Heart right ventricle (tissue), 16 donors: ENCODE measurements at regions of chr17 and their contacts with region 1.

Region 1: DNA sequence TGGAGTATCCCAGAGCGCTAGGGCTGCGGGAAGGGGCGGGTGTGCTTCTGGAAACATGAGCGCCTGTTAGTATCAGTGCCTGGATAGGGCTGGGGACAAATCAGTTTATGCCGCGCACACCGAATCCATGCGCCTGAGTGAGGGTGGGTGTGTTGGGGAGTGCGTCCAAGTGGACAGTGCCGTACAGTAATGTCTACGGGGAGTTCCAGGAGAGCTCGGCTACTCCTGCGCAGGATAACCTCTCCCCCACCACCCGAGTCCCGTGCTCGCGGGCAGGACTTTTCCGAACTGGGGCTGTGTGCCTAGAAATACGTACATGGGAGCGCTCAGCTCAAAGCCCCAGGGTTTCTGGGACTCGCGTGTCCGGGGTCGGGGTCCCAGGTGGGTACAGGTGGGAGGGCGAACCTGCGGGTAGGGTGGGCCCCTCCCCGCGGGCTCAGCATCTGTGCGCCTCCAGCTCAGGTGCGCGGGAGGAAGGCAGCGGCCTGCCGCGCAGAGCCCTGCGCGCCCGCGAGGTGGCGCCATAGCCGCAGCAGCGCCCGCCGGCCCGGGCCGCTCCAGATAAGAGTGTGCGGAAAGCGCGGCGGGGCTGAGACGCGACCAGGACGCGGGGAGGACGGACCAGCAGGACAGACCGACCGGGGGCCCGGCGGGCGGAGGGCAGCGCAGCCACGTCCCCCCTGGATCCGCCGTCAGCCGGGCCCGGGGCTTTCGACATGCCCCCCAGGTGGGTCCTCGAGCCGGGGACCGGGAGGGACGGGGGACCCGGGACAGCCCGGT is at the start of gene HIC1:
- DNase-seq: peak; percentile 79 to 85
- ATAC-seq: peak; percentile 57 to 71 (median 60)
- H3K4me3 ChIP-seq: peak within 1 kb of the TSS; percentile 50 to 83 (median 72)
- H3K27ac ChIP-seq: peak within 1 kb of the TSS; percentile 78 to 97 (median 93)
- H3K4me1 ChIP-seq: peaks cover 22 to 69% (median 53%) of the 10 kb centered on the region in 9 donors
- H3K27me3 ChIP-seq: peaks cover 0 to 80% (median 17%) of the 10 kb centered on the region in 7 donors
- CTCF ChIP-seq: peak; percentile 93 to 99 (median 98)
- total RNA-seq, gene HIC1: 3.5 to 37.5 (median 12.1) TPM

Region 2: DNA sequence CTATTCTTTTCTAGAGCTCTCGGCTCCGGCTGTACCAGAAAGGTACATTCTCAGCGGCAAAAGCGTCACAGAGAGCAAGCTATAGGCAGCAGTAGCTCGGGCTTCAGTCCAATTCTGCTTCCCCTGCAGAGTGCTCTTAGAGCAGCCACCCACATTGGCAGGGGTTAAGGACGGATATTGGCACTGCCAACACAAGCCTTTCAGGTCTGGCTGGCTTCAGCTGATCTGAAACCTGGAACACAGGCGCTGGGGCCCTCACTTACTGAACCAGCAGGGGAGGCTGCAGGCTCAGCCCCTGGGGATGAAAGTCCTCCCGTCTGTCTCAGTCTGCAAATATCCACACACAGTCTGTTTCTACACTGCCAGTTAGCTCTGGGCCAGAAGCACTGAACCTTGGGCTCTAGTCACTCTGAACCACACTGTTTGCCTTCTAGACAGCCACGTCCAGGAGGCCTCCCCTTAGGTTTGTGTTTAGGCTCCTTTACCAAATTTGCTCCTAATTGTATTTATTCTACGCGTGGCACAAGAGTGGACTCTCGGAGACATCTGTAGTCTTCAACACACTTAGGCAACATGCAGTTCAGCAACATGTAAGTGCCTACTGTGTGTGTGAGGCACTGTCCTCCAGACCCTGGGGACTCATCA is 40.3 kb after region 1 on chr17:
- intact Hi-C with region 1: loop called in 1 of 10 experiments (anchors 5 kb)
- DNase-seq: peak; percentile 70 to 73
- ATAC-seq: peak; percentile 80 to 93 (median 88)
- H3K4me3 ChIP-seq: no peak overlapping the region
- H3K27ac ChIP-seq: peak overlapping the region in 9 of 10 donors; percentile 17 to 65 (median 37)
- H3K4me1 ChIP-seq: peaks cover 5 to 51% (median 26%) of the 10 kb centered on the region in 9 donors
- H3K27me3 ChIP-seq: no peaks in the 10 kb centered on the region
- CTCF ChIP-seq: peak; percentile 43 to 83 (median 75)

Region 3: GRCh38 chr17:2111719-2112118 is 57.0 kb after region 1 on chr17:
- intact Hi-C with region 1: no loop called
- DNase-seq: no peak
- ATAC-seq: no peak
- H3K4me3 ChIP-seq: no peak overlapping the region
- H3K27ac ChIP-seq: no peak overlapping the region
- H3K4me1 ChIP-seq: peaks cover 7 to 21% (median 15%) of the 10 kb centered on the region in 9 donors
- H3K27me3 ChIP-seq: no peaks in the 10 kb centered on the region
- CTCF ChIP-seq: no peak

Region 4: GRCh38 chr17:2244545-2245525 is 190.1 kb after region 1 on chr17:
- intact Hi-C with region 1: loop called (anchors 1 to 5 kb)
- DNase-seq: peak; percentile 86 to 89
- ATAC-seq: peak; percentile 87 to 94 (median 92)
- H3K4me3 ChIP-seq: no peak overlapping the region
- H3K27ac ChIP-seq: peak overlapping the region in 9 of 10 donors; percentile 20 to 76 (median 61)
- H3K4me1 ChIP-seq: peaks cover 0 to 41% (median 14%) of the 10 kb centered on the region in 9 donors
- H3K27me3 ChIP-seq: no peaks in the 10 kb centered on the region
- CTCF ChIP-seq: peak; percentile 97 to 99 (median 99)

Region 5: GRCh38 chr17:2282297-2282873 is 227.7 kb after region 1 on chr17:
- intact Hi-C with region 1: loop called in 5 of 10 experiments (anchors 2 to 10 kb)
- DNase-seq: no peak
- ATAC-seq: peak in 7 of 8 donors; percentile 29 to 86 (median 48)
- H3K4me3 ChIP-seq: no peak overlapping the region
- H3K27ac ChIP-seq: peak overlapping the region in 1 of 10 donors; percentile 43
- H3K4me1 ChIP-seq: peaks cover 0 to 13% (median 0%) of the 10 kb centered on the region in 9 donors
- H3K27me3 ChIP-seq: no peaks in the 10 kb centered on the region
- CTCF ChIP-seq: peak; percentile 47 to 70 (median 63)

Region 6: DNA sequence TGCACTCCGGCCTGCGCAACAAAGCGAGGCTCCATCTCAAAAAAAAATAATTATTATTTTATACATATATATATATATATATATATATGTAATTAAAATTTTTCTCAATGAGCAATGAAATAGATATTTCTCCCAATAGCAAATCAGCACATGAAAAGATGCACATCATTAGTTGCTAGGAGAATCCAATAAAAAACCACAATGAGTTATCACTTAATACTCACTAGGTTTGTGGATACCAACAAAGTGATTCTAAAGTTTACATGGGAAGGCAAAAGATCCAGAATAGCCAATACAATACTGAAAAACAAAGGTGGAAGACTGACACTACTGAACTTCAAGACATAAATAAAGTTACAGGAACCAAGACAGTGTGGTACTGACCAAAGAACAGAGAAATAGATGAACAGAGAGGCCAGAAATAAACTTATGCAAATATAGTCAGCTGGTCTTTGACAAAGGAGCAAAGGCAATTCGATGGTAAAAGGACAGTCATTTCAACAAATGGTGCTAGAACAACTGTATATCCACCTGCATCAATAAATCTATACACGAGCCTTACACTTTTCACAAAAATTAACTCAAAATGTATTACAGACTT is 235.3 kb after region 1 on chr17:
- intact Hi-C with region 1: loop called in 2 of 10 experiments (anchors 5 to 10 kb)
- DNase-seq: no peak
- ATAC-seq: no peak
- H3K4me3 ChIP-seq: no peak overlapping the region
- H3K27ac ChIP-seq: no peak overlapping the region
- H3K4me1 ChIP-seq: no peaks in the 10 kb centered on the region
- H3K27me3 ChIP-seq: no peaks in the 10 kb centered on the region
- CTCF ChIP-seq: no peak

Region 7: DNA sequence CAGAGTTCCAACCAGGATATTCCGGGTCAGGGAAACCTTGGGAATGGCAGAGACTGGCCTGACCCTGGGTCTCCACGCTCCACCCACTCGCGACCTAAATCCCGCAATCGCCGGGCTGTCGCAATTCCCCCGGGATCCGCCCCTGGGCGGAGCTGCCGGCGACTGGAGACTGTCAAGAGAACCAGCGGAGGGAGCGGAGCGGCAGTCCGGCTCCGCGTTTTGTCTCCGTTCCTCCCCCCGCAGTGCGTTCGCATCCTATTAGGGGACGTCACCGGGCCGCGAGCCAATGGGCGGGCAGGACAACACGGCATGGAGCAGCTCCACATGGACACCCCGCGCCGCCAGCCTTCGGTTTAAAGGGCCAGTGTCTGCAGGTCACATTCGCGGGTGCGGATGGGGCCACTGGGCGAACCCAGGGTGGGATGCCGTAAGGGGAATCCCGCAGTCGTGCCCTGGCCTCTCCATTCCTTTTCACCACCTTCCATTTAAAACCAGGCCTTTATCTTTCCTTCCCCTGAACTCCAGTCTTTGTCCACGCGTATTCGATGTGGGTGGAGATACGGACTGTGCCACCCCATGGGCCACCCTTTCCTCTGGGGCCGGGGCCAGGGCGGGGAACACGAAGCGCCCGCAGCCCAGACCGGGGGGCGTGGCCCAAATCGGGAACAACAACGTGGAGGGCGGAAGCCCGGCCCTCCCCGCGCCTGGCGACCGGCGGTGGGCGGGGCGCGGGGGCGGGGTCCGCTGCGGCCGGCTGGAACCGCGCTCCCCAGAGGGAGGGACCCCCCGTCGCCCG is 346.9 kb after region 1 on chr17:
- intact Hi-C with region 1: loop called in 1 of 10 experiments (anchors 10 kb)
- DNase-seq: peak; percentile 100
- ATAC-seq: peak; percentile 56 to 80 (median 74)
- H3K4me3 ChIP-seq: peak overlapping the region; percentile 10 to 99 (median 89)
- H3K27ac ChIP-seq: peak overlapping the region; percentile 92 to 100 (median 98)
- H3K4me1 ChIP-seq: peaks cover 28 to 70% (median 66%) of the 10 kb centered on the region in 9 donors
- H3K27me3 ChIP-seq: no peaks in the 10 kb centered on the region
- CTCF ChIP-seq: no peak